ENCODE measurements at regions of chr5 and their contacts with region 1.

Region 1: GRCh38 chr5:159878988-159879471 is 37.3 kb upstream of the ADRA1B start:
- DNase-seq: peak; percentile 37
- H3K4me3 ChIP-seq: no peak overlapping the region
- H3K27me3 ChIP-seq: no peaks in the 10 kb centered on the region
- CTCF ChIP-seq: no peak

Region 2: GRCh38 chr5:159682623-159683022 is 196.4 kb before region 1 on chr5:
- CTCF ChIA-PET with region 1: no interaction called
- POLR2A ChIA-PET with region 1: no interaction called
- DNase-seq: no peak
- H3K4me3 ChIP-seq: no peak overlapping the region
- H3K27me3 ChIP-seq: no peaks in the 10 kb centered on the region
- CTCF ChIP-seq: no peak

Region 3: DNA sequence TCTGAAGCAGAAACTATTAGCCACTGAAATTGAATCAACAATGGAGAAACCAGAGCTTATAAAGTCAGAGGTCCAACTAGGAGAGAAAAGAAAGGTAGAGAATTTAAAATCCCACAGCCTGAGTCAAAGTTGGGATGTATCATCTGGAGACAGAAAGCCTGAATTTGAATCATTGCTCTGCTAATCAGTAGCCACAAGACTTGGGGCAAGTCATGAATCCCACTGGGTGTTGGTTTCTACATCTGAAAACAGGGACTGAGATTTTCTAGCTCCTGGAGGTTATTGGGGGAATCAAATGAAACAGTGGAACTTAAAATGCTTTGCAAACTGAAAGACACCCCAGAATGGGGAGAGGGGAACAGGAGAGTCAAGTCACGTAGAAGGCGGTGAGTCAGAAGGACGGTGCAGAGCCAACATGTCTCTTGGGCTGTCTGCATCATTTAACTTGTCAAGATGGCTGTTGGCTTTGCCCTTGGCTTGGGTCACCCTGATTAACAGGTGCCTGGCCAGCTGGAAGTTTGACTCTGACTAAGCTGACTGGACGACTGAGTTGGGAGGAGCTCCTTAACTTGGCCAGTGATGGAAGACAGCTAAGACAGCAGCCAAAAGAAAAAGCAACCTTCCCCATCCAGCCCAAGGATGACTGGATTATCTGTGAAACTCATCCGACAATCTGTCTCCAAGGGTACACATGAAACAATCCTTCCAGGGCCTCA is 23.4 kb before region 1 on chr5:
- CTCF ChIA-PET with region 1: interaction called, 11 read pairs
- POLR2A ChIA-PET with region 1: no interaction called
- DNase-seq: no peak
- H3K4me3 ChIP-seq: no peak overlapping the region
- H3K27me3 ChIP-seq: peaks cover 5% of the 10 kb centered on the region
- CTCF ChIP-seq: no peak

Region 4: GRCh38 chr5:159861086-159861485 is 17.9 kb before region 1 on chr5:
- CTCF ChIA-PET with region 1: interaction called, 11 read pairs
- POLR2A ChIA-PET with region 1: no interaction called
- DNase-seq: no peak
- H3K4me3 ChIP-seq: no peak overlapping the region
- H3K27me3 ChIP-seq: peaks cover 12% of the 10 kb centered on the region
- CTCF ChIP-seq: no peak

Region 5: DNA sequence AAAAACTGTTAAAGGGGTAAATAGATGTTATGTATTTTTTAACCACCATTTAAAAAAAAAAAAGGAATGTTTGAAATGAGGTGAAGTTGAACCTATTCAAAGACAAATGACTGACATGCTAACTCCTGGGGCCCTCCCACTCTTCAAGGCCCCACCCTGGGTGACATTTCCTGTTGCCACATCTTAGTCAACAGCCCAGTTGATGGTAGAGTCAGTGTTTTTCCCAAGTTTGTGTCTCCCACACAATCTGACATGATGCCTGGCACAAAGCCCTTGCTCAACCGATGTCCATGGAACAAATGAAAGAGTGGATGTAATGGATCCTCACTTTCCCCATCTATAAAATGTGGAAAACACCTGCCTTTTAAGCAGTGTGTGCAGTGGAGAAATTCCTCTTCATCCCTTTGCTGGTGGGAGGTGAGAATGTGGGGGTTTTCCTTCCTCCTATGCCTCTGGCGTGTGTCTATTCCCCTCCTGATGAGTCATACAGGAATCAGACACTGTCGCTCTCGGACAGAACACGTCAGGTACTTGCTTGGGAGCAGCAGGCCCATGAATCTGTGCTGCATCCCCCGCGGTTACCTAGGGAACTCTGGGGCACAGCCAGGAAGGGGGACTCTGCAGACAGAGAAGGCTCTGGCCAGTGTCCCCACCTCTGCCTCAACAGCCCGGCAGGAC is 23.6 kb after region 1 on chr5:
- CTCF ChIA-PET with region 1: no interaction called
- POLR2A ChIA-PET with region 1: no interaction called
- DNase-seq: no peak
- H3K4me3 ChIP-seq: no peak overlapping the region
- H3K27me3 ChIP-seq: no peaks in the 10 kb centered on the region
- CTCF ChIP-seq: no peak

Region 6: DNA sequence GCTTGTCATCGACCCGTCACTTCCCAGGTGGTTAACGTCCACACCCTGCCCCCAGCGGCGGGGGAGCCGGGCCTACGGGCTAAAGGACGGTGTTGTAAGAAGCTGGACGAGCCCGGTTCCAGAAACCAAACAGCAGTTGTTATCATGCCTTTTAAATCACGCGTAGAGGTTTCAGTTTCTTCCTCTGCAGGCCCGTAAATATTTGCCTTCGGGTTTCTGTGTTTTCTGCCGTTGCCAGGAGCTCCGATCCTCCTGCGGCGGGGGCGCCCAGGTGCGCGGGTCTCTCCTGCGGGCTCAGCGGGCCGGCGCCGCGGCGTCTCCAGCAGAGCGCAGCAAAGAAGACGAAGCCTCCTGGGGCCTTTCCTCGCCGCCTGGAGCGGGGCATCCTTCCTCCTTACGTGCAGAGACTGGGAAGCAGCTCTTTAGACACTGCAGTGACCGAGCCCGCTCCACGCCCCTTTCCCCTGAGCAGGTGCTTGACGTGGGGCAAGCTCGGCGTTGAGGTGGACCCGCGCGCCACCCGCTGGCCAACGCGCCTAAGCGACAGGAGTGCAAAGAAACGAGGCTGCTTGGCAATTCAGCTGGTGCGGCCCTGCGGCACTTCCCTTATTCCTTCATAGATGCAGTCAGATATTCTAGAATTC is 108.1 kb after region 1 on chr5:
- CTCF ChIA-PET with region 1: no interaction called
- POLR2A ChIA-PET with region 1: no interaction called
- DNase-seq: no peak
- H3K4me3 ChIP-seq: peak overlapping the region; percentile 36
- H3K27me3 ChIP-seq: peaks cover 1% of the 10 kb centered on the region; the same call in 1 of the 2 replicates
- CTCF ChIP-seq: peak; percentile 87

Measured in BJ (cell line).